OCI-LY7 (cell line): ENCODE measurements at regions of chr17 and their contacts with region 1.

Region 1: GRCh38 chr17:75289115-75289831 is at the start of gene SLC25A19:
- DNase-seq: peak; percentile 100
- H3K4me3 ChIP-seq: peak within 1 kb of the TSS; percentile 86
- H3K27ac ChIP-seq: peak within 1 kb of the TSS; percentile 80
- H3K4me1 ChIP-seq: peaks cover 52% of the 10 kb centered on the region
- CTCF ChIP-seq: peak; percentile 69
- total RNA-seq, gene SLC25A19: 113 TPM in 2 replicates

Region 2: DNA sequence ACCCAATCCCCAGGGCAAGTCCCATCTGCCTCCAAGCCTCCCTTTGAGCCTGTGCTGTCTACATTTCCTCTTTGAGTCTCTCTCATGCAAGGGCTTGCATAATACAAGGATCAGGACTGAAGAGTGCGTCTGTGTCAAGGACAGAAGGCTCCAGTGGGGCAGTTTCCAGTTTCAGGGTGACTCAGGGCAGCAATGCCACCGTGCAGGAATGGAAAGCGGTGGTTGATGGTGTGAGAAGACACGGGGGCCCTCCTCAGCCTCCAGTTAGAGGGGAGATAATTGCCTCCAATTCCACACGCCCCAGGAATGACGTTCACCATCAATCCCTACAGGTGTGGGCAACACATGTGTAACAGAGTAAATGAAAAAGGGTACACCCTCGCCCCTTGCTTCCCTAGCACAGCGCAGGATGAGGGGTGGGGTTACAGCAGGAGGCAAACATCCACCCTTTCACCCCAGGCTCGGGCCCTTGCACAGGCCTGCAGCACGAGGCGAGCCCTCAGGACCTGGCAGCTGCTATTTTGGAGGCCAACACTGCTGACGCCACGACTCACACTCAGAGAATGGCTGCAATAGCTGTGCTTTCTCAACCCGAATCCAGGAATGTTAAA is 24.8 kb after region 1 on chr17:
- CTCF ChIA-PET with region 1: interaction called, 5 read pairs
- POLR2A ChIA-PET with region 1: interaction called, 16 read pairs
- intact Hi-C with region 1: no loop called
- DNase-seq: no peak
- H3K4me3 ChIP-seq: no peak overlapping the region
- H3K27ac ChIP-seq: peak overlapping the region; percentile 25
- H3K4me1 ChIP-seq: peaks cover 84% of the 10 kb centered on the region
- CTCF ChIP-seq: no peak

Region 3: DNA sequence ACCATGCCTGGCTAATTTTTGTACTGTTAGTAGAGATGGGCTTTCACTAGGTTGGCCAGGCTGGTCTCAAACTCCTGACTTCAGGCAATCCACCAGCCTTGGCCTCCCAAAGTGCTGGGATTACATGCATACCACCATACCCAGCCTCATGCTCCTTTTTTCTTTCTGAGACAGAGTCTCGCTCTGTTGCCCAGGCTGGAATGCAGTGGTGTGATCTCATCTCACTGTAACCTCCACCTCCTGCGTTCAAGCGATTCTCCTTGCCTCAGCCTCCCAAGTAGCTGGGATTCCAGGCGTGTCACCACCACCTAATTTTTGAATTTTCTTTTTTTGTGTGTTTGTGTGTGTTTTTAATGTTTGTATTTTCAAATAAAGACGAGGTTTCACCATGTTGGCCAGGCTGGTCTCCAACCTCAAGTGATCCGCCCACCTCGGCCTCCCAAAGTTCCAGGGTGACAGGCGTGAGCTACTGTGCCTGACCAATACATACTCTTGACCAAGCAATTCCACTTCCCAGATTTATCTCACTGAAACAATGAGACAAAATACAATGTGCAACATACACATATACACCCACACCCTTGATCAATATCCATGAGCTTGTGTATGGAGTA is 111.2 kb after region 1 on chr17:
- CTCF ChIA-PET with region 1: interaction called, 7 read pairs
- POLR2A ChIA-PET with region 1: interaction called, 91 read pairs
- intact Hi-C with region 1: loop called (anchors 1 kb)
- DNase-seq: no peak
- H3K4me3 ChIP-seq: no peak overlapping the region
- H3K27ac ChIP-seq: no peak overlapping the region
- H3K4me1 ChIP-seq: peaks cover 48% of the 10 kb centered on the region
- CTCF ChIP-seq: no peak

Region 4: GRCh38 chr17:75412455-75413317 is 123.4 kb after region 1 on chr17:
- CTCF ChIA-PET with region 1: interaction called, 3 read pairs
- POLR2A ChIA-PET with region 1: interaction called, 91 read pairs
- intact Hi-C with region 1: loop called (anchors 1 kb)
- DNase-seq: peak; percentile 95
- H3K4me3 ChIP-seq: peak overlapping the region; percentile 50
- H3K27ac ChIP-seq: peak overlapping the region; percentile 60
- H3K4me1 ChIP-seq: peaks cover 54% of the 10 kb centered on the region
- CTCF ChIP-seq: peak; percentile 97